Activated CD4-positive, alpha-beta memory T cell treated with anti-CD3 and anti-CD28 coated beads for 36 hours (primary cell): ENCODE measurements at regions of chr5 and their contacts with region 1.

Region 1: GRCh38 chr5:112921833-112922817 is at the start of gene REEP5:
- DNase-seq: peak; percentile 89
- H3K4me3 Mint-ChIP-seq: peak within 1 kb of the TSS; percentile 95
- H3K27ac Mint-ChIP-seq: peak within 1 kb of the TSS; percentile 94
- H3K4me1 Mint-ChIP-seq: peaks cover 60% of the 10 kb centered on the region
- H3K27me3 Mint-ChIP-seq: no peaks in the 10 kb centered on the region
- total RNA-seq, gene REEP5: 64.6 to 67.4 TPM

Region 2: GRCh38 chr5:112419986-112420864 is 501.9 kb before region 1 on chr5:
- CTCF ChIA-PET with region 1: no interaction called
- POLR2A ChIA-PET with region 1: no interaction called
- intact Hi-C with region 1: loop called (anchors 5 kb)
- DNase-seq: peak; percentile 67
- H3K4me3 Mint-ChIP-seq: peak overlapping the region; percentile 61
- H3K27ac Mint-ChIP-seq: no peak overlapping the region
- H3K4me1 Mint-ChIP-seq: peaks cover 10% of the 10 kb centered on the region
- H3K27me3 Mint-ChIP-seq: peaks cover 40% of the 10 kb centered on the region

Region 3: DNA sequence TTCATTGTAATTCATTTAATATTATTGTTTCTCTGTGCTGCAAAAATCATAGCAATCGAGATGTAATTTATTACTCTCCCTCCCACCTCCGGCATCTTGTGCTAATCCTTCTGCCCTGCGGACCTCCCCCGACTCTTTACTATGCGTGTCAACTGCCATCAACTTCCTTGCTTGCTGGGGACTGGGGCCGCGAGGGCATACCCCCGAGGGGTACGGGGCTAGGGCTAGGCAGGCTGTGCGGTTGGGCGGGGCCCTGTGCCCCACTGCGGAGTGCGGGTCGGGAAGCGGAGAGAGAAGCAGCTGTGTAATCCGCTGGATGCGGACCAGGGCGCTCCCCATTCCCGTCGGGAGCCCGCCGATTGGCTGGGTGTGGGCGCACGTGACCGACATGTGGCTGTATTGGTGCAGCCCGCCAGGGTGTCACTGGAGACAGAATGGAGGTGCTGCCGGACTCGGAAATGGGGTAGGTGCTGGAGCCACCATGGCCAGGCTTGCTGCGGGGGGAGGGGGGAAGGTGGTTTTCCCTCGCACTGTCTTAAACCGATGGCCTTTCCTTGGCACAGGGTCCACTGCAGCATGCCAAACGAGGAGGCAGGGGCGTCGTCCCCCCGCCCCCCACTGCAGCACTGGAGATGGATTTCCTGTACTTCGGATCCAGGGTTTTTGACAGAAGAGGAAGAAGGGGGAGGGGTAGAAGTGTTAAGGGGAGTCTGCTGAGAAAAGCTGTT is 184.5 kb before region 1 on chr5 and contains the start of gene APC:
- CTCF ChIA-PET with region 1: no interaction called
- POLR2A ChIA-PET with region 1: no interaction called
- intact Hi-C with region 1: loop called (anchors 1 kb)
- DNase-seq: peak; percentile 93
- H3K4me3 Mint-ChIP-seq: peak within 1 kb of the TSS; percentile 93
- H3K27ac Mint-ChIP-seq: peak within 1 kb of the TSS; percentile 53
- H3K4me1 Mint-ChIP-seq: peaks cover 13% of the 10 kb centered on the region
- H3K27me3 Mint-ChIP-seq: no peaks in the 10 kb centered on the region
- total RNA-seq, gene APC: 17.3 to 20.1 TPM

Region 4: GRCh38 chr5:112951124-112951702 is 29.1 kb after region 1 on chr5:
- CTCF ChIA-PET with region 1: no interaction called
- POLR2A ChIA-PET with region 1: no interaction called
- intact Hi-C with region 1: loop called (anchors 2 kb)
- DNase-seq: peak; percentile 81
- H3K4me3 Mint-ChIP-seq: peak overlapping the region; percentile 29
- H3K27ac Mint-ChIP-seq: no peak overlapping the region
- H3K4me1 Mint-ChIP-seq: peaks cover 14% of the 10 kb centered on the region
- H3K27me3 Mint-ChIP-seq: no peaks in the 10 kb centered on the region

Region 5: DNA sequence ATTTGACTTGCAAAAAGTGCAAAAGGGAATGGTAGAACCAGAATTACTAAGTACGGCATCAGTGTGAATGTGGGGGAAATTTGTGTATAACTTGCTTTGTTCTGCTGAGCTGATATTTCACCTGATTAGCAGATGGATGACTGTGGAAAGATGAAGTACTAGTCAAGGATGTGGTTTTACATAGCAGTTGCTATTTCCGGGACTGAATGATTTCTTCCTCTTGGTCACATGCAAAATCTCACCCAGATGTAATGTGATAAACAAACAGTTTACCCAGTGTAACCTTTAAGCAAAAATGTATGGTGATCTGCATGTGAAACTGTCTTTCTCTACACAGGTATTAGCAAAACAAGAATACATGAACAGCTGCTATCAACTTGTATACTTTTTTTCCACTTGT is 100.5 kb after region 1 on chr5:
- CTCF ChIA-PET with region 1: no interaction called
- POLR2A ChIA-PET with region 1: no interaction called
- intact Hi-C with region 1: loop called (anchors 2 kb)
- DNase-seq: no peak
- H3K4me3 Mint-ChIP-seq: no peak overlapping the region
- H3K27ac Mint-ChIP-seq: peak overlapping the region; percentile 77
- H3K4me1 Mint-ChIP-seq: peaks cover 68% of the 10 kb centered on the region
- H3K27me3 Mint-ChIP-seq: no peaks in the 10 kb centered on the region